ENCODE measurements at regions of chr2 and their contacts with region 1.

Region 1: GRCh38 chr2:126776692-126777619 is 121.0 kb downstream of the GYPC start:
- DNase-seq: peak; percentile 82 to 92 (median 91)
- ATAC-seq: peak; percentile 95 to 96
- H3K4me3 ChIP-seq: peak overlapping the region; percentile 51
- H3K27ac ChIP-seq: peak overlapping the region; percentile 9
- H3K4me1 ChIP-seq: no peaks in the 10 kb centered on the region
- H3K27me3 ChIP-seq: no peaks in the 10 kb centered on the region

Region 2: DNA sequence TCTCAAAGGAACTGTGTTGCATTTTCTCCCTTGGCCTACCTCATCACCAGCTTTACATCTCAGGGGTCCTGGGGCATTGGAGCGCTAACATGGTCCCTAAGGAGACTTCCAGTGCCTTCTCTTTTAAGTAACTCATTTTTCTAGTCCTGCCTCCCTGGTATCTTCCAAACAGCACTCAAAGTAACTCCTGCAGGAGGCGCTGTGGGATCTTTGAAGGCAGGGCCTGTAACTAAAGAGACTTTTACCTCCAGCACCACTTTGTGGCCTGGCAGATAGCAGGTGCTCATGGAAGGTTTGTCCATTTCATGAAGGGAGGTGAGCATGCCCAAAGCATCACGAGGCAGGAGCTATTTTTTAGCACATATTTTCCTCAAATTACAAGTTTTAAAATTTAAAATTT is 532.0 kb before region 1 on chr2:
- intact Hi-C with region 1: loop called in 2 of 4 experiments (anchors 10 kb)
- DNase-seq: peak in 2 of 3 donors; percentile 35 to 73
- ATAC-seq: no peak
- H3K4me3 ChIP-seq: no peak overlapping the region
- H3K27ac ChIP-seq: no peak overlapping the region
- H3K4me1 ChIP-seq: peaks cover 3% of the 10 kb centered on the region
- H3K27me3 ChIP-seq: no peaks in the 10 kb centered on the region

Region 3: DNA sequence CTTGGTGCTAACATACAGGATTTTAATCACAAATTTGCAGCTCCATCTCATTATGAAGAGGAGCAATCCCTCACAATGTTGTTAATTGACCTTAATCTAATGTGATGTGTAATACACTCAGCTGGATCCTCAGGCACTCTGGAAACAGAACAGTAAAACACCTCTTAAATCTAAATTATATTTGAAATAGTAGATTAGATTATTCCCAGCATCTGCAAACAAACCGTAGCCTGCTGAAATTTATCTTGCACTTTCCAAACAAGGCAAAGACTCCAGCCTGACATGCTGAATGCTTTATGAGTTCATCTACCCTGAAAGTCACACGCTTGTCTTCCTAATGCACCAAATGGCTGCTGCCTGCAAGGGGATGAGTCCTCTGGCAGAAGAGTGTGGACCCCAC is 523.3 kb before region 1 on chr2:
- intact Hi-C with region 1: loop called in 2 of 4 experiments (anchors 10 kb)
- DNase-seq: no peak
- ATAC-seq: no peak
- H3K4me3 ChIP-seq: no peak overlapping the region
- H3K27ac ChIP-seq: no peak overlapping the region
- H3K4me1 ChIP-seq: no peaks in the 10 kb centered on the region
- H3K27me3 ChIP-seq: no peaks in the 10 kb centered on the region

Region 4: GRCh38 chr2:126527836-126528507 is 249.0 kb before region 1 on chr2:
- intact Hi-C with region 1: loop called in 3 of 4 experiments (anchors 2 to 5 kb)
- DNase-seq: peak; percentile 65 to 84 (median 71)
- ATAC-seq: peak; percentile 69 to 81
- H3K4me3 ChIP-seq: no peak overlapping the region
- H3K27ac ChIP-seq: no peak overlapping the region
- H3K4me1 ChIP-seq: no peaks in the 10 kb centered on the region
- H3K27me3 ChIP-seq: no peaks in the 10 kb centered on the region

Region 5: DNA sequence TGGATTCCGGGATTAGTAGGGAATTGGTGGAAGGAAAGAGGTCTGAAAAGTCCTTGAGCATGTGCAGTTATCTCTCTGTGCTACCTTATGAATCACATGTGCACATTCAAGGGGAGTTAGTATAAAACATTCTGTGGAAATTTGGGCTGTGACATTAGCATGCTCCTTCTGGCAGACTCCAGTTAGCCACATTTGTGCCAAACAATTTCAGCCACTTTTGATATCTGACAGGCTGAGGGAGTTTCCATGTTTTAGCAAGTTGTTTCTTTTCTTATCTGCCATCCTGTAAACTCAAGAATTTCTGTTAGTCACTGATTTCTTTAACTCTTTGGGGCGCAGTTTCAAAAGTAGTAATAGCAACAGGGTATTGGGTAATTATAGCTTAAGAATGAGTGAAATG is 149.3 kb before region 1 on chr2:
- intact Hi-C with region 1: loop called in 1 of 4 experiments (anchors 10 kb)
- DNase-seq: no peak
- ATAC-seq: peak; percentile 88 to 94
- H3K4me3 ChIP-seq: no peak overlapping the region
- H3K27ac ChIP-seq: no peak overlapping the region
- H3K4me1 ChIP-seq: no peaks in the 10 kb centered on the region
- H3K27me3 ChIP-seq: no peaks in the 10 kb centered on the region

Region 6: GRCh38 chr2:127371037-127371436 is 594.1 kb after region 1 on chr2:
- intact Hi-C with region 1: no loop called
- DNase-seq: peak; percentile 62 to 88 (median 72)
- ATAC-seq: peak; percentile 50 to 89
- H3K4me3 ChIP-seq: no peak overlapping the region
- H3K27ac ChIP-seq: no peak overlapping the region
- H3K4me1 ChIP-seq: no peaks in the 10 kb centered on the region
- H3K27me3 ChIP-seq: no peaks in the 10 kb centered on the region